ENCODE measurements at regions of chr9 and their contacts with region 1.

Region 1: GRCh38 chr9:131733541-131734061 is 6.3 kb downstream of the RAPGEF1 start:
- DNase-seq: peak in 2 of 5 donors; percentile 52 to 84
- H3K4me3 ChIP-seq: peak overlapping the region; percentile 20 to 34
- H3K4me3 Mint-ChIP-seq: peak overlapping the region; percentile 63 to 88 (median 82)
- H3K27ac ChIP-seq: peak overlapping the region; percentile 84
- H3K27ac Mint-ChIP-seq: peak overlapping the region; percentile 89 to 98 (median 96)
- H3K4me1 ChIP-seq: peaks cover 96% of the 10 kb centered on the region
- H3K4me1 Mint-ChIP-seq: peaks cover 70 to 93% (median 83%) of the 10 kb centered on the region in 4 donors
- H3K27me3 ChIP-seq: no peaks in the 10 kb centered on the region
- H3K27me3 Mint-ChIP-seq: no peaks in the 10 kb centered on the region

Region 2: GRCh38 chr9:130352081-130352480 is 1381.5 kb before region 1 on chr9:
- CTCF ChIA-PET with region 1: no interaction called
- POLR2A ChIA-PET with region 1: no interaction called
- intact Hi-C with region 1: no loop called
- DNase-seq: no peak
- H3K4me3 ChIP-seq: no peak overlapping the region
- H3K4me3 Mint-ChIP-seq: no peak overlapping the region
- H3K27ac ChIP-seq: no peak overlapping the region
- H3K27ac Mint-ChIP-seq: no peak overlapping the region
- H3K4me1 ChIP-seq: no peaks in the 10 kb centered on the region
- H3K4me1 Mint-ChIP-seq: no peaks in the 10 kb centered on the region
- H3K27me3 ChIP-seq: no peaks in the 10 kb centered on the region
- H3K27me3 Mint-ChIP-seq: no peaks in the 10 kb centered on the region

Region 3: DNA sequence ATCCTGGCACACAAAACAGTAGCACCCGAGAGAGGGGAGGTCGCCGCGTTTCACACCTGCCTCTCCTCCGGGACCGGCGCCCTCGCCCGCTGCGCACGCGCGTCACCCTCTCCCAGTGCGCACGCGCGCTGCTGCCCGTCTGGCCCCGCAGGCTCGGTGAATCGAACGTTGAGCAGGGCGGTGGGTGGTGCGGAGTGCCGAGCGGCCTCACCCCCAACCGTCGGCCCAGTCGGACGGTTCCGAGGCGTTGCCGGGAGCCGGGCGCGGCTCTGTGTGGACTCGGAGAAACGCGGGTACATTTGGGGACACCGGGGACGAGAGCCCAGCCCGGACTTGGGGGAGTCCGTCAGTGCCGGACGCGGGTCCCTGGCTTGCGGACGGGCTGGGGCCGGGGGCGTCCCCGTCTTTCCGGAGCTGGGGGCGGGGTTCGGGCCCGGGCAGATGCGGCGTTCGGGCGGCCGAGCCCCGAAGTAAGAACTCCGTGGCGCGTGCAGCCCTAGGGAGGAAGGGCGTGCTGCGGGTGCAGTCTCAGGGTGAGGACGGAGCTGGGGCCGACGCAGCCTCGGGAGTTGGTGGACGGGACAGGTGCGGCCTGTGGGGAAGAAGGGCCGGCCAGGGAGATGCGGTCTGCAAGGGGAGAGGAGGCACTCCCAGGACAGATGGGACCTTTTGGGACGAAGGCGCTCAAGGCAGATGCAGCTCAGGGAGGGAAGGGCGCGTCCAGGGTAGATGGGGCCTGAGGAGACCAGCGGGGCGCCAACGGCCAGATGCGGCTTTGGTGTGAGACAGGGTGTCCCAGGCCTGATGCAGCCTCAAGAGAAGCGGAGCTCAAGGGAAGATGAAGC is 230.6 kb before region 1 on chr9 and contains the start of gene POMT1:
- CTCF ChIA-PET with region 1: no interaction called
- POLR2A ChIA-PET with region 1: interaction called, 16 read pairs
- intact Hi-C with region 1: no loop called
- DNase-seq: peak; percentile 90 to 91 (median 91)
- H3K4me3 ChIP-seq: peak within 1 kb of the TSS; percentile 74 to 86
- H3K4me3 Mint-ChIP-seq: peak within 1 kb of the TSS; percentile 92 to 98 (median 94)
- H3K27ac ChIP-seq: peak within 1 kb of the TSS; percentile 74
- H3K27ac Mint-ChIP-seq: peak within 1 kb of the TSS; percentile 79 to 97 (median 92)
- H3K4me1 ChIP-seq: peaks cover 67% of the 10 kb centered on the region
- H3K4me1 Mint-ChIP-seq: peaks cover 44 to 79% (median 56%) of the 10 kb centered on the region in 4 donors
- H3K27me3 ChIP-seq: no peaks in the 10 kb centered on the region
- H3K27me3 Mint-ChIP-seq: no peaks in the 10 kb centered on the region
- total RNA-seq, gene POMT1: 52.1 to 58.5 TPM

Region 4: DNA sequence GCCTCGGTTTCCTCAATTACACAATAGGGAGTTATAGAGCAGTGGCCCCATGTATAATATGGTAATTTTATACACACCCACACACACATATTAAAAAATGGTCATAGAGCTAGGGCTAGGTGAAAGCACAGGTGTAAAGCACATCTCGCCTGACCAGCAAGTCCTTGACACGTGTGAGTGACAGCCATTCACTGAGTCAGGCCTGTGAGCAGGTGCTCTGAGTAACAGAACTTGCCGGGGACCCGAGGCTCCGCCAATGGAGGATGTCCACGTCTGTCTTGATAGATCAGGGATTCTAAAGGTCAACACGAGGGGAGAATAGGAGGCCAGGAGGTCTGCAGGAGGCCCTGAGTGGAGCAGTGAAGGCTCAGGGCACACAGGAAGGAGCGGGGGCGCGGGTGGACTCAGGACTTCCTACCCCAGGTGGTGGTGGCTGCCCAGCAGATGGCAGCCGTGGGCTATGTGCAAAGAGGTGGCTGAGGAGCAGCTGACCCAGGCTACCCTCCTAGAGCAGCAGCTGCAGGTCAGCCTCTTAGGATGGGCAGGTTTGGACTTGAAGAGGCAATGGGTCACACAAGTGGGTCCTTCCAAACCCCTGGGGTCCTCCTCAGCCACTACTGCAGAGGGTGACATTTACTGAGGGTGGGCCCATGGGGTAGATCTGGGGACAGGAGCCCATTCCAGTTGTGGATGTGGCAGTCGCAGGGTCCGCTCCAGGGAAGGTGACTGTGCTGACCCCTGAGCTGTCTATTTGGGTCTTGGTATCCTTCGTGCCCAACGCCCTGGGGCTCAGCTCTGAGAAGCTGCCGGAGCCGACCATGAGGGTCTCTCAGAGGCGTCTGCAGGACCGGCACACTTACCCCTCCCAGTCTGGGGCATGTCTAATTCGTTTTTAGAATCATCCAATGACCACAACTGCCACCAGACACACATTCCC is 142.4 kb before region 1 on chr9:
- CTCF ChIA-PET with region 1: interaction called, 186 read pairs
- POLR2A ChIA-PET with region 1: interaction called, 26 read pairs
- intact Hi-C with region 1: no loop called
- DNase-seq: peak; percentile 68 to 74 (median 73)
- H3K4me3 ChIP-seq: no peak overlapping the region
- H3K4me3 Mint-ChIP-seq: peak overlapping the region in 6 of 8 donors; percentile 20 to 73 (median 46)
- H3K27ac ChIP-seq: no peak overlapping the region
- H3K27ac Mint-ChIP-seq: peak overlapping the region; percentile 77 to 94 (median 85)
- H3K4me1 ChIP-seq: peaks cover 25% of the 10 kb centered on the region
- H3K4me1 Mint-ChIP-seq: peaks cover 22 to 48% (median 34%) of the 10 kb centered on the region in 4 donors
- H3K27me3 ChIP-seq: no peaks in the 10 kb centered on the region
- H3K27me3 Mint-ChIP-seq: no peaks in the 10 kb centered on the region

Region 5: GRCh38 chr9:131656356-131657036 is 77.1 kb before region 1 on chr9:
- CTCF ChIA-PET with region 1: interaction called, 3 read pairs
- POLR2A ChIA-PET with region 1: interaction called, 28 read pairs
- intact Hi-C with region 1: no loop called
- DNase-seq: peak; percentile 73 to 93 (median 76)
- H3K4me3 ChIP-seq: peak overlapping the region in 1 of 2 donors; percentile 4
- H3K4me3 Mint-ChIP-seq: peak overlapping the region; percentile 50 to 86 (median 72)
- H3K27ac ChIP-seq: peak overlapping the region; percentile 70
- H3K27ac Mint-ChIP-seq: peak overlapping the region; percentile 92 to 99 (median 97)
- H3K4me1 ChIP-seq: peaks cover 81% of the 10 kb centered on the region
- H3K4me1 Mint-ChIP-seq: peaks cover 53 to 87% (median 73%) of the 10 kb centered on the region in 4 donors
- H3K27me3 ChIP-seq: no peaks in the 10 kb centered on the region
- H3K27me3 Mint-ChIP-seq: no peaks in the 10 kb centered on the region

Region 6: GRCh38 chr9:131678499-131679111 is 55.0 kb before region 1 on chr9:
- CTCF ChIA-PET with region 1: interaction called, 80 read pairs
- POLR2A ChIA-PET with region 1: interaction called, 692 read pairs
- intact Hi-C with region 1: loop called (anchors 1 kb)
- DNase-seq: peak; percentile 64 to 94 (median 73)
- H3K4me3 ChIP-seq: peak overlapping the region in 1 of 2 donors; percentile 30
- H3K4me3 Mint-ChIP-seq: peak overlapping the region; percentile 74 to 94 (median 90)
- H3K27ac ChIP-seq: peak overlapping the region; percentile 79
- H3K27ac Mint-ChIP-seq: peak overlapping the region; percentile 94 to 100 (median 98)
- H3K4me1 ChIP-seq: peaks cover 71% of the 10 kb centered on the region
- H3K4me1 Mint-ChIP-seq: peaks cover 74 to 100% (median 89%) of the 10 kb centered on the region in 4 donors
- H3K27me3 ChIP-seq: no peaks in the 10 kb centered on the region
- H3K27me3 Mint-ChIP-seq: no peaks in the 10 kb centered on the region

Region 7: DNA sequence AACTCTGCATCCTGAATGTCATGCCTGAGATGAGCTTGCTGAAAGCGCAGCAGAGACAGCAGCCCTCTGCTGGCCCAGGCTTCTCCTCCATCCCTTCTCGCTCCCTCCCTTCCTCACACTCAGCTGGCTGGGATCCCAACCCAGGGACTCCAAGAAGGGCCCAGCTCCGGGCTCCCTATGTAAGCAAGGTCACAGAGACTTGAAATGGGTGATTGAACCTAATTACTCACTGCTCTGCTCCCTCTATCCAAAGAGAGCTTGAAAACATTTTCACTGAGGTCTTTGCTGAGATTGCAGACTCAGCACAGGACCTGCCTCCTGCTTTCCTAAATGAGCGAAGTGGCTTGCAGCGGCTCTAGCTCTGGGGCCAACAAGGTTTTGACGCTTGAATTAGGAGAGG is 36.5 kb before region 1 on chr9:
- CTCF ChIA-PET with region 1: interaction called, 7 read pairs
- POLR2A ChIA-PET with region 1: interaction called, 18 read pairs
- intact Hi-C with region 1: no loop called
- DNase-seq: no peak
- H3K4me3 ChIP-seq: no peak overlapping the region
- H3K4me3 Mint-ChIP-seq: peak overlapping the region in 1 of 8 donors; percentile 48
- H3K27ac ChIP-seq: no peak overlapping the region
- H3K27ac Mint-ChIP-seq: peak overlapping the region in 4 of 7 donors; percentile 58 to 86 (median 68)
- H3K4me1 ChIP-seq: peaks cover 88% of the 10 kb centered on the region
- H3K4me1 Mint-ChIP-seq: peaks cover 77 to 99% (median 89%) of the 10 kb centered on the region in 4 donors
- H3K27me3 ChIP-seq: no peaks in the 10 kb centered on the region
- H3K27me3 Mint-ChIP-seq: no peaks in the 10 kb centered on the region

Region 8: DNA sequence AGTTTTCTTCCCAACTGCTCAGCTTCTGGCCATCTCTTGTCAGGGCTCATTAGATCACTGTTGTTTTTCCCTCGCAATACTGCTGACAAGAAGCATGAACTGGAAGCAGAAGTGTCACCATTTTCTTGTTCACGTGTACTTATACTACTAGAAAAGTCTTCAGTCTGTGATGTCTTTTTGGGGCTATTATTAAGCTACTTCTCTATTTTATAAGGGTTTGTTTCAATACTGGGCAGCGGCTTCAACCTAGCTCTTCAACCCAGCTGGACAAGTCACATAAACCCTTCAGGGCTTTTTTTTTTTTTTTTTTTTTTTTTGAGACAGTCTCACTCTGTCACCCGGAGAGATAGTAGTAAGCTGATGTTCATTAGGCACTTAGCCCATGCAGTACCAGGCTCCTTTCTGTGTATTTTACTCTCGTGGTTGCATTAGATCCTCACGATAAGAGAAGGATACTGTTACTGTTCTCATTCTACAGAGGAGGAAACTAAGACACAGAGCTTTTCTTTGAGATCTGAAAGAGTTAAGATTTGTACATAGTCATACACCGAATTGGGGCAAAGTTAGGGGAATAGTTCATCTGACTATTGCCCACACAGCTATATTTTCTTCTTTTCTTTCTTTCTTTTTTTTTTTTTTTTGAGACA is 14.2 kb before region 1 on chr9:
- CTCF ChIA-PET with region 1: interaction called, 28 read pairs
- POLR2A ChIA-PET with region 1: interaction called, 37 read pairs
- intact Hi-C with region 1: loop called (anchors 1 kb)
- DNase-seq: no peak
- H3K4me3 ChIP-seq: no peak overlapping the region
- H3K4me3 Mint-ChIP-seq: peak overlapping the region in 6 of 8 donors; percentile 25 to 86 (median 60)
- H3K27ac ChIP-seq: peak overlapping the region; percentile 17
- H3K27ac Mint-ChIP-seq: peak overlapping the region; percentile 82 to 94 (median 89)
- H3K4me1 ChIP-seq: peaks cover 59% of the 10 kb centered on the region
- H3K4me1 Mint-ChIP-seq: peaks cover 55 to 94% (median 75%) of the 10 kb centered on the region in 4 donors
- H3K27me3 ChIP-seq: no peaks in the 10 kb centered on the region
- H3K27me3 Mint-ChIP-seq: no peaks in the 10 kb centered on the region

Region 9: GRCh38 chr9:132114102-132114707 is 380.6 kb after region 1 on chr9:
- CTCF ChIA-PET with region 1: no interaction called
- POLR2A ChIA-PET with region 1: no interaction called
- intact Hi-C with region 1: no loop called
- DNase-seq: peak in 4 of 5 donors; percentile 8 to 28 (median 22)
- H3K4me3 ChIP-seq: no peak overlapping the region
- H3K4me3 Mint-ChIP-seq: no peak overlapping the region
- H3K27ac ChIP-seq: no peak overlapping the region
- H3K27ac Mint-ChIP-seq: no peak overlapping the region
- H3K4me1 ChIP-seq: no peaks in the 10 kb centered on the region
- H3K4me1 Mint-ChIP-seq: no peaks in the 10 kb centered on the region
- H3K27me3 ChIP-seq: no peaks in the 10 kb centered on the region
- H3K27me3 Mint-ChIP-seq: peaks cover 19 to 31% of the 10 kb centered on the region in 2 donors

Measured in CD4-positive, alpha-beta memory T cell (primary cell).